ENCODE measurements at regions of chr2 and their contacts with region 1.

Region 1: DNA sequence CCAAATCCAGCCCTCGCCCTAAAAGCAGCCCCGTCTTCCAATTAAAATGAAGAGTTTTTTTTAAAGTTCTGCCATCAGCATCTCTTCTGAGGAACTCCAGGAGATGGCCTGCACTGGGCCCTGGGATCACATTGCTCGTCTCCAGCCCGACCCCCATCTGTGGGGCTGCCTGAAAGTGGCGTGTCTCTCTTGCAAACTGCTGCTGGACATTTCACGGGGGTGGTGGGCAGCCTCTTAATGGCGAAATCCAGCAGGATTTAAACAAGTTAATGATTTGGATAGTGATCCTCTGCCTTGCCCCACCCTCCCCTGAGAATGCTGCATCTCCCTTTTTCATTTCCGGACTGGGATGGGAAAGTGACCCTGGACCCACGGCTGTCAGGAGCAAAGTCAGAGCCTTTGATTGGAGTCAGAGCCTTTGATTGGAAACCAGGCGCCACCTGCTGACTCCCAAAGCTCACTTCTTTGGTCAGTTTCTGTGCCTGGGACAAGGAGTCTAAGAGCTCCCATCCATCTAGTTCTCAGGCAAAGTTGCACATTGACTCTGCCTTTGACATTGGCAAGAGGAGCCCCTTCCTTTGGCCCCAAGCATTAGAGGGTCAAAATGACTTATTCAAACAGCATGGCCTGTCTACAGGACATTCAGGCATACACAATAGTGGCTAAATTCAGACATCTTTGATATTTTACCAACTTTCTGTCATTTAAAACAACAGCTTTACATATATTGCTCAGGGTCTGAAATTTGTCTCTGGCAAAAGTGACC is 155.2 kb downstream of the SH3BP4 start:
- DNase-seq: peak; percentile 58 to 63
- H3K4me3 ChIP-seq: no peak overlapping the region
- H3K27ac ChIP-seq: no peak overlapping the region
- H3K4me1 ChIP-seq: no peaks in the 10 kb centered on the region
- H3K27me3 ChIP-seq: no peaks in the 10 kb centered on the region
- CTCF ChIP-seq: peak; percentile 51 to 76 (median 72)
- POLR2A ChIP-seq: no peak

Region 2: GRCh38 chr2:234550511-234551107 is 556.4 kb before region 1 on chr2:
- intact Hi-C with region 1: loop called (anchors 5 kb)
- DNase-seq: peak; percentile 58 to 60
- H3K4me3 ChIP-seq: no peak overlapping the region
- H3K27ac ChIP-seq: no peak overlapping the region
- H3K4me1 ChIP-seq: no peaks in the 10 kb centered on the region
- H3K27me3 ChIP-seq: no peaks in the 10 kb centered on the region
- CTCF ChIP-seq: peak; percentile 89 to 95 (median 92)
- POLR2A ChIP-seq: no peak

Region 3: GRCh38 chr2:234690569-234691213 is 416.4 kb before region 1 on chr2:
- intact Hi-C with region 1: no loop called
- DNase-seq: no peak
- H3K4me3 ChIP-seq: no peak overlapping the region
- H3K27ac ChIP-seq: no peak overlapping the region
- H3K4me1 ChIP-seq: no peaks in the 10 kb centered on the region
- H3K27me3 ChIP-seq: no peaks in the 10 kb centered on the region
- CTCF ChIP-seq: no peak
- POLR2A ChIP-seq: no peak

Region 4: GRCh38 chr2:234881413-234882241 is 225.4 kb before region 1 on chr2:
- intact Hi-C with region 1: loop called (anchors 10 kb)
- DNase-seq: peak; percentile 84 to 87
- H3K4me3 ChIP-seq: no peak overlapping the region
- H3K27ac ChIP-seq: peak overlapping the region in 1 of 2 donors; percentile 42
- H3K4me1 ChIP-seq: peaks cover 0 to 4% of the 10 kb centered on the region in 2 donors
- H3K27me3 ChIP-seq: no peaks in the 10 kb centered on the region
- CTCF ChIP-seq: peak; percentile 64 to 84 (median 68)
- POLR2A ChIP-seq: no peak

Region 5: DNA sequence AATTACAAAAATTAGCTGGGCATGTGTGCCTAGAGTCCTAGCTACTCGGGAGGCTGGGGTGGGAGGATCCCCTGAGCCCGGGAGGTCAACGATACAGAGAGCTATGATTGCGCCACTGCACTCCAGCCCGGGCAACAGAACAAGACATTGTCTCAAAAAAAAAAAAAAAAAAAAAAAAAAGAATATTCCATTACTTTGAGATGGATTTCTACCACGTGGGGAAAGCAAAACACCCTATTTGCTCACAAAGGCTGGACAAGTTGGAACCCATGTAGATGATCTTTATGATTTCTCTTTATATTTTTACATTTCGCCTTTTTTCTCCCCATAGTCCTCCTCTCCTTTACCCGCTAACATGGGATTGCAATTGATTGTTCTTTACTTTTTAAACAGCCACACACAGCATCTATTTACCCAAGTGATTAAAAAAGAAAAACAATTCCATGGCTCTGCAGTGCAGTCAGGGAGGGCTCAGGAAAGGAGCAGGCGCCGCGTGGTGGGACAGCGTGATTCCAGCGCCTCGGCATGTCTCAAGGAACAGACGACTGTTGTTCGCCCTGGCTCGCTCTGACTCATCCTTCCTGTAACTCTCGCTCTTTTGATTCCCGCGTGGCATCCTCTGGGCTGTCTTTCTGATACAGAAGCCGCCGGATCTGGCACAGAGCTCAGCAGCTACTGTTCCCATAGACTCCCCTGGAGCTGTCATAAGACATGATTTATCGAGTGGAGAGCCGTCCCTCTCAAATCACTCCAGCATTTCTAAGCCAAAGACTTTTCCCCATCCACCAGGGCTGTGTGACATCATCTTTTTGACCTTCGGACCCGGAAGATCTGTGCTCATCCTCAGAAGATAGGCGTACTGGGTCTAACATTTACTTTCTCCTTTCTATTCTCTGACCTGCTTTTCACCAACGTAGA is 156.4 kb after region 1 on chr2:
- intact Hi-C with region 1: no loop called
- DNase-seq: peak; percentile 59 to 79
- H3K4me3 ChIP-seq: peak overlapping the region in 1 of 2 donors; percentile 0
- H3K27ac ChIP-seq: no peak overlapping the region
- H3K4me1 ChIP-seq: no peaks in the 10 kb centered on the region
- H3K27me3 ChIP-seq: no peaks in the 10 kb centered on the region
- CTCF ChIP-seq: no peak
- POLR2A ChIP-seq: no peak